ENCODE measurements at regions of chr19 and their contacts with region 1.

Region 1: DNA sequence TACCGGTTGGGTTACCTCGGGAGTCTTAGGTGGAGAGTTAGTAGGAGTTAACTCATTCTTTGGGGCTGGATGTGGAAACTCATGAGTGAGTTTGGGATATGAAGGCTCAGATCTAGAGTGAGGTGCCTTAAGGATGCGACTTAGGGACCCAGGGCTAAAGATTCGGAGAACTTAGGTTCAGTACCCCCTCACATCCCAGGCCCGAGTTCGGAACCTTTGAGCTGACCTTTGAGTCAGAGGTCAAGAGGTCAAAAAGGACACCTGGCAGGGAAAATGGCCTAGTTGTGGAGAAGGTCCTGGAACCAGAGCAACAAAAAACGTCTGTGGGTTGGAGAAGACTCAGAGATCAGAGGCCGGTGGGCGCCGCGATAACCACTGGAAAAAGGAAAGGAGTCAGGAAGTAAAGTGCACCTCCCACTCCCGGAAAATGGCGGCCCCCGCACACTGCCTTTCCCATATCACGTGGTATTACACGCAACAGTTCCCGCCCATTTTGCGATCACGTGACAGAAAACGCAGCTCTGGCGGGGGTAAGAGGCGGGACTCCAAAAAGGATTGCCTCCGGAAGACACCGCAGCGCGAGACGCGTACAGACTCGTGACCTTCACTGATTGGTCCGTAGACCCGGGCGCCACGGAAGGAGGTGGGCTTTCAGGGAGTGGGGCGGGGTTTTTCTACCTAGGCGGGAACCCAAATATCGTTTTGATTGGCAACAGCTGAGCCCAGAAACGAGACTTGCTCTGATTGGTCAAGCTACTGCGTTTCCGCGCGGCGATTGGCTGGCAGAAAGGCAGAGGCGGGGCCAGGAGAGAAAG is at the start of gene ACTMAP:
- DNase-seq: peak; percentile 100
- H3K4me3 Mint-ChIP-seq: peak within 1 kb of the TSS; percentile 96
- H3K27ac Mint-ChIP-seq: peak within 1 kb of the TSS; percentile 99
- H3K4me1 Mint-ChIP-seq: peaks cover 43% of the 10 kb centered on the region
- H3K27me3 Mint-ChIP-seq: no peaks in the 10 kb centered on the region
- total RNA-seq, gene ACTMAP: 18.1 to 18.8 TPM

Region 2: GRCh38 chr19:40716655-40717324 is 33.5 kb before region 1 on chr19 and contains the starts of genes COQ8B and ITPKC:
- CTCF ChIA-PET with region 1: interaction called, 8 read pairs
- POLR2A ChIA-PET with region 1: interaction called, 27 read pairs
- DNase-seq: peak; percentile 100
- H3K4me3 Mint-ChIP-seq: peak within 1 kb of the TSS; percentile 90
- H3K27ac Mint-ChIP-seq: peak within 1 kb of the TSS; percentile 87
- H3K4me1 Mint-ChIP-seq: peaks cover 70% of the 10 kb centered on the region
- H3K27me3 Mint-ChIP-seq: no peaks in the 10 kb centered on the region
- total RNA-seq, gene COQ8B: 32.5 to 37.7 TPM
- total RNA-seq, gene ITPKC: 6.6 to 6.8 TPM

Region 3: DNA sequence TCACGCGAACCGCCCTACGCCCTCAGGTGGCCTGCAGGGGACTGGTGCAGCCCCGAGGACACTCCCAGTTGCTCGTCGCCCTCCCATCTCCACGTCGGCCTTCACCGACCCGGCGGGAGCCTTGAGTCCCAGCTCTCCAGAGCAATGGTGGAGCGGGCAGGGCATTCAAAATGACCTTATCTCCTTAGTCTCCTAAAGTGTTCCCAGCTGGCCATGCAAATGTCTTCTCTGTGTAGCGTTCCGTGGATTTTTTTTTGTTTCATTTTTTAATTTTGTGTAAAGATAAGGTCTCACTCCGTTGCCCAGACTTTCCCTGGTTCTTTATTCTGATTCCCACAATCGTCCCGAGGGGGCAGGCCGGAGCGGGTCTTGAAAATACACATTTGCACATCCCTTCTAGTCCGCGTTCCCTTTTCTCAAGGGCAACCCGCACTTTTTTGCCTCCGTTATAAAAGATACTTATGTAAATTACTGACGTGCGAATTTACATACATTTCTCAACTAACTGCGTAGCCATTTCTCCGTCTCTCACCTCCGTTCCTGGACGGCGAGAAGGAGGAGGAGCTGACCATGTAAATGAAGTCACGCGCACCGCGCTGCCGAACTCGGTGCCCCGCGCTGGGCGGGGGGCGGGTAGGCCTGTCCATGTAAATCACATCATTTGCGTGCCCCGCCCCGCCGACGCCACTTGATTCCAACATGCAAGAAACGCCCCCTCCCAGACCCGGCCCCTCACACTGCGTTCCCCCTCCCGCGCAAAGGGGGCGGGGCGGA is 48.1 kb after region 1 on chr19:
- CTCF ChIA-PET with region 1: interaction called, 13 read pairs
- POLR2A ChIA-PET with region 1: interaction called, 70 read pairs
- DNase-seq: peak; percentile 100
- H3K4me3 Mint-ChIP-seq: peak overlapping the region; percentile 78
- H3K27ac Mint-ChIP-seq: peak overlapping the region; percentile 84
- H3K4me1 Mint-ChIP-seq: peaks cover 55% of the 10 kb centered on the region
- H3K27me3 Mint-ChIP-seq: no peaks in the 10 kb centered on the region

Region 4: GRCh38 chr19:40806488-40807468 is 56.5 kb after region 1 on chr19:
- CTCF ChIA-PET with region 1: interaction called, 40 read pairs
- POLR2A ChIA-PET with region 1: interaction called, 70 read pairs
- DNase-seq: peak; percentile 84
- H3K4me3 Mint-ChIP-seq: peak overlapping the region; percentile 64
- H3K27ac Mint-ChIP-seq: peak overlapping the region; percentile 97
- H3K4me1 Mint-ChIP-seq: peaks cover 91% of the 10 kb centered on the region
- H3K27me3 Mint-ChIP-seq: peaks cover 5% of the 10 kb centered on the region

Region 5: DNA sequence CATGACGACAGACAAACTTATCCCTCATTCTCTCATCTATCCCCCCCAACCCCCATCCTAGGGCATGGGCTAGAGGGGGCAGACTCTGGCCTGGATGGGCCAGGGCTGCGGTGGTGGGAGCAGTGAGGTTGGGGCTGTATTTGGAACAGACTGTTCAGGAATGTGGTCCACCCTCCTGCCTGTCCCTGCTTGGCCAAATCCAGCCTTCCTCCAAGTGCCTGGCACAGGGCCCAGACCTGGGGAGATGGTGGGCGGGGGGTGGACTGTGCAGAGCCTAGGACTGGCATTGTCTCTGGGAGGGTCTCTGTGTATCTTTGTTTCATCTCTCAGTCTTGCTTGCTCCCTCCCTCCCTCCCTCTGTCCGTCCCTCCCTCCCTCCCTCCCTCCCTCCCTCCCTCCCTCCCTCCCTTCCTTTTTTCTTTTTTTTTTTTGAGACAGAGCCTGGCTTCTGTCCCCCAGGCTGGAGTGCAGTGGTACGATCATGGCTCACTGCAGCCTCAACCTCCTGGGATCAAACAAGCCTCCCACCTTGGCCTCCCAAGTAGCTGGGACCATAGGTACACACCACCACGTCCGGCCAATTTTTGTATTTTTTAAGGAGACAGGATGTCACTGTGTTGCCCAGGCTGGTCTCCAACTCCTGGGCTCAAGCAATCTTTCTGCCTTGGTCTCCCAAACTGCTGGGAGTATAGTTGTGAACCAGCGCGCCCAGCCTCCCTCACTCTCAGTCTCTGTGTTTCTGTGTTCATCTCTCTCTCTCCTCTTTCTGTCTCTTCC is 63.1 kb after region 1 on chr19:
- CTCF ChIA-PET with region 1: interaction called, 40 read pairs
- POLR2A ChIA-PET with region 1: interaction called, 4 read pairs
- DNase-seq: no peak
- H3K4me3 Mint-ChIP-seq: no peak overlapping the region
- H3K27ac Mint-ChIP-seq: no peak overlapping the region
- H3K4me1 Mint-ChIP-seq: peaks cover 39% of the 10 kb centered on the region
- H3K27me3 Mint-ChIP-seq: peaks cover 34% of the 10 kb centered on the region

Measured in activated CD4-positive, alpha-beta memory T cell treated with anti-CD3 and anti-CD28 coated beads, Interleukin-2, amount 10 ng/mL, durations not matched to agents 7 days and 5 days (primary cell).